ENCODE measurements at regions of chr7 and their contacts with region 1.

Region 1: DNA sequence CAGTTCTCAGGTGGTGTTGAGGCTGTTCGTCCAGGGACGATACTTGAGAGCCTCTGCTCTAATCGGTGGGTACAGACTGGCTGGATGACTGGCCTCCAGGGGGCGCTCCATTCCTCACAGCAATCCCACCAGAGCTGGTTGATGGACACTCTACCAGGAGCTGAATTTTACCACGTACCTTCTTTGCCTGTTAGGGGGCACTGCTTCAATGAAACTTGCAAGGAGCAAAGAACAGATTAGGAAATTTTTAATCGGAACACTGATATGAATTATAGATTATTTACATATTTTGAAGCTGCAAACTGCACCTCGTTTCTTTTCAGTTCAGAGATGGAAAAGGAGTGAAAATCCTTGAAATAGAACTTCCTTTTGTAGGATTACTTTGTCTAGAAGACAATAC is 44.9 kb downstream of the KBTBD2 start:
- DNase-seq: peak; percentile 72
- H3K4me3 ChIP-seq: peak overlapping the region in 1 of 2 experiments; percentile 46; a peak in 2 of 4 replicates
- H3K27ac ChIP-seq: no peak overlapping the region
- H3K4me1 ChIP-seq: peaks cover 0 to 3% of the 10 kb centered on the region in 2 experiments; a peak in 1 of 4 replicates
- H3K27me3 ChIP-seq: no peaks in the 10 kb centered on the region
- CTCF ChIP-seq: peak; percentile 90
- EP300 ChIP-seq: no peak
- RAD21 ChIP-seq: peak; percentile 71

Region 2: GRCh38 chr7:32266932-32267475 is 579.7 kb before region 1 on chr7:
- CTCF ChIA-PET with region 1: no interaction called
- POLR2A ChIA-PET with region 1: no interaction called
- DNase-seq: no peak
- H3K4me3 ChIP-seq: no peak overlapping the region
- H3K27ac ChIP-seq: no peak overlapping the region
- H3K4me1 ChIP-seq: no peaks in the 10 kb centered on the region
- H3K27me3 ChIP-seq: peaks cover 28% of the 10 kb centered on the region
- CTCF ChIP-seq: no peak
- EP300 ChIP-seq: no peak
- RAD21 ChIP-seq: no peak

Region 3: DNA sequence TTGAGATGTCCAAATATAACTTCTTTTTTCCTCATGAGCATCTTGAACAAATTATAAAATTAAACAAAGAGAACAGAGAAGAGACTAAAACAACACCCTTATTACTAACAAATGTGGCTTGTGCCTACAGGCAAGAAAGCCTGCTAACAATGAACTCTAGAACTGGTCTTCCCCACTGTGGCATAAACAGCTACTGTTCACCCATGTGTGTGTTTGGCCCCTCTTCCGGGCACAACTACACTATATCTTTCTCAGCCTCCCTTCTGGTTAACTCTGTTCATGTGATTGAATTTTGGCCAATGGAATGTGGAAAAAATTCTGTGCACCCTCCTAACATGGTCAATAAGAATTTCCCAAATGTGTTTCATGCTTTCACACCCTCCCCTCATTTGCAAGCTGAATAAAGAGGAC is 72.2 kb before region 1 on chr7:
- CTCF ChIA-PET with region 1: no interaction called
- POLR2A ChIA-PET with region 1: no interaction called
- DNase-seq: no peak
- H3K4me3 ChIP-seq: no peak overlapping the region
- H3K27ac ChIP-seq: peak overlapping the region in 1 of 2 experiments; percentile 43; a peak in 2 of 4 replicates
- H3K4me1 ChIP-seq: peaks cover 0 to 9% of the 10 kb centered on the region in 2 experiments; a peak in 2 of 4 replicates
- H3K27me3 ChIP-seq: no peaks in the 10 kb centered on the region
- CTCF ChIP-seq: no peak
- EP300 ChIP-seq: no peak
- RAD21 ChIP-seq: no peak

Region 4: GRCh38 chr7:32809347-32809746 is 37.4 kb before region 1 on chr7:
- CTCF ChIA-PET with region 1: interaction called, 12 read pairs
- POLR2A ChIA-PET with region 1: no interaction called
- DNase-seq: no peak
- H3K4me3 ChIP-seq: no peak overlapping the region
- H3K27ac ChIP-seq: no peak overlapping the region
- H3K4me1 ChIP-seq: no peaks in the 10 kb centered on the region
- H3K27me3 ChIP-seq: no peaks in the 10 kb centered on the region
- CTCF ChIP-seq: no peak
- EP300 ChIP-seq: no peak
- RAD21 ChIP-seq: no peak

Region 5: GRCh38 chr7:32871624-32872371 is 25.1 kb after region 1 on chr7:
- CTCF ChIA-PET with region 1: interaction called, 34 read pairs
- POLR2A ChIA-PET with region 1: no interaction called
- DNase-seq: no peak
- H3K4me3 ChIP-seq: no peak overlapping the region
- H3K27ac ChIP-seq: no peak overlapping the region
- H3K4me1 ChIP-seq: no peaks in the 10 kb centered on the region
- H3K27me3 ChIP-seq: no peaks in the 10 kb centered on the region
- CTCF ChIP-seq: no peak
- EP300 ChIP-seq: no peak
- RAD21 ChIP-seq: no peak

Region 6: GRCh38 chr7:32891800-32892520 is 45.3 kb after region 1 on chr7:
- CTCF ChIA-PET with region 1: interaction called, 37 read pairs
- POLR2A ChIA-PET with region 1: no interaction called
- DNase-seq: peak; percentile 96
- H3K4me3 ChIP-seq: peak overlapping the region; percentile 78 to 86
- H3K27ac ChIP-seq: peak overlapping the region; percentile 98 to 99
- H3K4me1 ChIP-seq: peaks cover 26 to 30% of the 10 kb centered on the region in 2 experiments; a peak in 3 of 4 replicates
- H3K27me3 ChIP-seq: no peaks in the 10 kb centered on the region
- CTCF ChIP-seq: no peak
- EP300 ChIP-seq: peak; percentile 45 to 47; a peak in 2 of 4 replicates
- RAD21 ChIP-seq: no peak

Region 7: GRCh38 chr7:32942786-32943653 is 96.3 kb after region 1 on chr7:
- CTCF ChIA-PET with region 1: interaction called, 48 read pairs
- POLR2A ChIA-PET with region 1: no interaction called
- DNase-seq: peak; percentile 99
- H3K4me3 ChIP-seq: peak overlapping the region; percentile 71 to 82
- H3K27ac ChIP-seq: peak overlapping the region; percentile 81 to 91
- H3K4me1 ChIP-seq: peaks cover 3 to 10% of the 10 kb centered on the region in 2 experiments; a peak in 3 of 4 replicates
- H3K27me3 ChIP-seq: no peaks in the 10 kb centered on the region
- CTCF ChIP-seq: peak; percentile 64
- EP300 ChIP-seq: no peak; a peak in 3 of 4 replicates
- RAD21 ChIP-seq: peak; percentile 74

Region 8: DNA sequence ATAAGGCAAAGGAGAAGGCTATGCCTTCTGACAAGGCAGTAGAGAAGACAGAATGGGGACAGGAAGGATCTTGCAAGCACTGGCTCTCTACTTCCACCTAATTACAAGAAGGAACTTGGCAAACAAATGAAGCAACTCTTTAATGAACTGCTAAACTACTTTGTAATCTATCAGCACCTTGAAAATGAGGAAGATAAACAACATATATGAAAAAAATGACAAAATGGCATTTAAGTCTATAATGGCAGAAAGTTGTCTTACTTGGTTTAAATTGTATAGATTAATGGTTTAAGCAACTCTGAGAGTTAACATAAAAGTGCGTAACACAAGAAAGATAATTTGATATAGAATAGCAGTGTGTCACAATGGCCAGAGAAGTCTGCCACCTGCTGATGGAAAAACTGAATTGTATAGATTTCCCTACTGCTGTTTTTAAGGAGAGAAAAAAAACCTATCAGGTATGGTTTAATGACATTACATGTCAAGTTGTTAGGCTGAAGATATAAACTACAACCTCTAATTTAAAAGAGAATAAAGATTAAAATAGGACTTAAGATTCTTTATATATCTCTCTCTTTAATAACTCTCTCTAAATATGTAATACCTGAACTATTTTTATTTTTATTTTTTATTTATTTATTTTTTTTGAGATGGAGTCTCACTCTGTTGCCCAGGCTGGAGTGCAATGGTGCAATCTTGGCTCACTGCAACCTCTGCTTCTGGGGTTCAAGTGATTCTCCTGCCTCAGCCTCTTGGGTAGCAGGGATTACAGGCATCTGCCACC is 204.0 kb after region 1 on chr7:
- CTCF ChIA-PET with region 1: interaction called, 14 read pairs
- POLR2A ChIA-PET with region 1: no interaction called
- DNase-seq: peak; percentile 51
- H3K4me3 ChIP-seq: no peak overlapping the region
- H3K27ac ChIP-seq: no peak overlapping the region
- H3K4me1 ChIP-seq: peaks cover 3 to 4% of the 10 kb centered on the region in 2 experiments; a peak in 1 of 4 replicates
- H3K27me3 ChIP-seq: no peaks in the 10 kb centered on the region
- CTCF ChIP-seq: peak; percentile 92
- EP300 ChIP-seq: no peak
- RAD21 ChIP-seq: peak; percentile 82